ENCODE measurements at regions of chr19 and their contacts with region 1.

Region 1: GRCh38 chr19:54851353-54851752 is 1.1 kb downstream of the KIR3DL2 start:
- DNase-seq: no peak
- ATAC-seq: no peak
- H3K4me3 ChIP-seq: no peak overlapping the region
- H3K27ac ChIP-seq: no peak overlapping the region
- H3K4me1 ChIP-seq: no peaks in the 10 kb centered on the region
- H3K27me3 ChIP-seq: peaks cover 0 to 9% (median 0%) of the 10 kb centered on the region in 7 donors
- CTCF ChIP-seq: no peak

Region 2: DNA sequence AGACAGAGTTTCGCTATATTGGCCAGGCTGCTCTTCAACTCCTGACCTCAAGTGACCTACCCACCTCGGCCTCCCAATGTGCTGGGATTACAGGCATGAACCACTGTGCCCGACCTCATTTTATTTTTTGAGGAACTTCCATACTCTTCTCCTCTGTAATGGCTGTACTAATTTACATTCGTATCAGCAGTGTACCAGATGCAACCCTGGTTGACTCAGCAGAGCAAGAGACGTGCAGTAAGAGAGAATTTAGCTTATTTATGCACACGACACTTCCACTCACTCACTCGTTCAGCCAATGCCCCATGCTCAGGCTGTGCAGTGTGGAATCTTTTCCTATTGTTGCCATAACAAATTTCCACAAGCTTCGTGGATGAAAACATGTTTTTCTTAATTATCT is 120.2 kb before region 1 on chr19:
- intact Hi-C with region 1: loop called in 2 of 10 experiments (anchors 5 to 10 kb)
- DNase-seq: no peak
- ATAC-seq: no peak
- H3K4me3 ChIP-seq: no peak overlapping the region
- H3K27ac ChIP-seq: no peak overlapping the region
- H3K4me1 ChIP-seq: no peaks in the 10 kb centered on the region
- H3K27me3 ChIP-seq: peaks cover 0 to 5% (median 0%) of the 10 kb centered on the region in 7 donors
- CTCF ChIP-seq: no peak

Region 3: GRCh38 chr19:54738715-54739114 is 112.6 kb before region 1 on chr19:
- intact Hi-C with region 1: loop called in 3 of 10 experiments (anchors 2 to 10 kb)
- DNase-seq: no peak
- ATAC-seq: no peak
- H3K4me3 ChIP-seq: no peak overlapping the region
- H3K27ac ChIP-seq: no peak overlapping the region
- H3K4me1 ChIP-seq: no peaks in the 10 kb centered on the region
- H3K27me3 ChIP-seq: peaks cover 0 to 3% (median 0%) of the 10 kb centered on the region in 7 donors
- CTCF ChIP-seq: no peak

Region 4: DNA sequence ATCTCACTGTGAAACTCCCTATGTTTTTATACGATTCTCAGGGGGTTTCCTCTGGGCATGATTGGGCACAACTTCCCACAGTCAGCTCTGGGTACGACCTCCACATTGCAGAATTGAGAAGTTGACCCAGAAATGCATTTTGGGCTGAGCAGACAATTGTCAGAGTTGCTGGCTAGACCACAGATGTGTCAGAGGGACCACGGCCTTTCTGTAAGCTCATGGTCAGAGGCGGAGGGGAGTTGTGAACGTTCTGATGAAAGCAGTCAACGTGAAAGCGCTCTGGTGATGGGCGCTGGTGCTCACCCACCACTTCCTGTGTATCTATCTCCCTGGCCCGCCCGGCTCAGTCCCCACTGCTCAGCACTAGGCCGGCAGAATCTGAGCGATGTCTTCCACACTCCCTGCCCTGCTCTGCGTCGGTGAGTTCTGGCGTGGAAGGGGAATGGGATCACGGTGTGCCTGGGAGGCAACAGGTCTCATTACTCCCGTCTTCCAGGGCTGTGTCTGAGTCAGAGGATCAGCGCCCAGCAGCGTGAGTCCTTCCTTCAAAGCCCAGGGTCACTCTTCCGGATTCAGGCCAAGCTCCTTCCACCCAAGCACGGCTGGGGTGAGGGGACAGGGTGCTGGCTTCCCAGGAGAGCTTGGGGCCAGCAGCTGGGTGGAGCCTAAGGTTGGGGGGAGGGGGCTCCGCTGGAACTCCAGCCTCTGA is 54.6 kb after region 1 on chr19 and contains the start of gene NCR1:
- intact Hi-C with region 1: no loop called
- DNase-seq: no peak
- ATAC-seq: no peak
- H3K4me3 ChIP-seq: peak within 1 kb of the TSS in 1 of 10 donors; percentile 2
- H3K27ac ChIP-seq: peak within 1 kb of the TSS in 1 of 10 donors; percentile 43
- H3K4me1 ChIP-seq: no peaks in the 10 kb centered on the region
- H3K27me3 ChIP-seq: peaks cover 0 to 25% (median 16%) of the 10 kb centered on the region in 7 donors
- CTCF ChIP-seq: no peak
- total RNA-seq, gene NCR1: 0.38 to 0.81 (median 0.60) TPM in 3 of 10 donors, not detected in the others